OCI-LY7 (cell line): ENCODE measurements at regions of chr7 and their contacts with region 1.

Region 1: DNA sequence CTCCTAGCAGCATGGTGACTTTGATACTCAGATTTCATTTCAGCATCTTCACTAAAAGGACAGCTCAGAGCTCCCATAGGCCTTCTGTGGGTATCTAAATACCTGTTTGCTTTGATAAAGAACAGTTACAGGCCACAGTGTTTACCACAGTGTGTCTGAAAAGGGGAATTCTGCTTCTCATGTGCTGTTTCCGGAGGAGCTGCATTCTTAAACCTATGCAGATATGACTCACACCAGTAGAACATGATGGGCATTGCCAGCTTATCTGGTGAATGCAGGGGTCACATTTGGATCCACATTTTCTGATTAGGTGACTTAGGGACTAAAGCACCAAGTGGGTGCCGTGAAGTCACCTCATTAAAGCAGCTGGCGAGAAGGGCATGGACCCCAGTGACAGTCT is 52.6 kb downstream of the TRRAP start:
- DNase-seq: no peak
- H3K4me3 ChIP-seq: no peak overlapping the region
- H3K27ac ChIP-seq: no peak overlapping the region
- H3K4me1 ChIP-seq: no peaks in the 10 kb centered on the region
- CTCF ChIP-seq: no peak

Region 2: GRCh38 chr7:98613601-98614425 is 317.1 kb before region 1 on chr7:
- CTCF ChIA-PET with region 1: no interaction called
- POLR2A ChIA-PET with region 1: no interaction called
- intact Hi-C with region 1: no loop called
- DNase-seq: peak; percentile 27
- H3K4me3 ChIP-seq: no peak overlapping the region
- H3K27ac ChIP-seq: no peak overlapping the region
- H3K4me1 ChIP-seq: peaks cover 3% of the 10 kb centered on the region
- CTCF ChIP-seq: no peak

Region 3: DNA sequence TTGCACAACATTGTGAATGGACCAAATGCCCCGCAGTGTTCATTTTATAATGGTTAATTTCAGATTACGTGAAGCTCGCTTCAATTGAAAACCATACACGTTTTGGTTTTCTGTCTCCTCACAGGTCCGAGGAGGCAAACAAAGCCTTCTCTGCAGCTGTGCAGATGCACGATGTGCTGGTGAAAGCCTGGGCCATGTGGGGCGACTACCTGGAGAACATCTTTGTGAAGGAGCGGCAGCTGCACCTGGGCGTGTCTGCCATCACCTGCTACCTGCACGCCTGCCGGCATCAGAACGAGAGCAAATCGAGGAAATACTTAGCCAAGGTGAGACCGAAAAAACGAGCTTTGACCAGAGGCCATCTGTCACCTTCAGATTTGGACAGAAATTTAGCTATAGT is 57.7 kb after region 1 on chr7:
- CTCF ChIA-PET with region 1: interaction called, 3 read pairs
- POLR2A ChIA-PET with region 1: no interaction called
- intact Hi-C with region 1: loop called (anchors 5 kb)
- DNase-seq: no peak
- H3K4me3 ChIP-seq: no peak overlapping the region
- H3K27ac ChIP-seq: no peak overlapping the region
- H3K4me1 ChIP-seq: no peaks in the 10 kb centered on the region
- CTCF ChIP-seq: no peak